ENCODE measurements at regions of chr7 and their contacts with region 1.

Region 1: GRCh38 chr7:127717502-127718339 is 65.7 kb downstream of the SND1 start:
- DNase-seq: no peak
- H3K4me3 ChIP-seq: no peak overlapping the region
- H3K27ac ChIP-seq: no peak overlapping the region
- H3K4me1 ChIP-seq: no peaks in the 10 kb centered on the region
- H3K27me3 ChIP-seq: no peaks in the 10 kb centered on the region
- CTCF ChIP-seq: no peak
- POLR2A ChIP-seq: no peak

Region 2: GRCh38 chr7:127635659-127636285 is 81.9 kb before region 1 on chr7:
- intact Hi-C with region 1: no loop called
- DNase-seq: no peak
- H3K4me3 ChIP-seq: no peak overlapping the region
- H3K27ac ChIP-seq: peak overlapping the region in 1 of 2 donors; percentile 76
- H3K4me1 ChIP-seq: no peaks in the 10 kb centered on the region
- H3K27me3 ChIP-seq: no peaks in the 10 kb centered on the region
- CTCF ChIP-seq: no peak
- POLR2A ChIP-seq: no peak

Region 3: DNA sequence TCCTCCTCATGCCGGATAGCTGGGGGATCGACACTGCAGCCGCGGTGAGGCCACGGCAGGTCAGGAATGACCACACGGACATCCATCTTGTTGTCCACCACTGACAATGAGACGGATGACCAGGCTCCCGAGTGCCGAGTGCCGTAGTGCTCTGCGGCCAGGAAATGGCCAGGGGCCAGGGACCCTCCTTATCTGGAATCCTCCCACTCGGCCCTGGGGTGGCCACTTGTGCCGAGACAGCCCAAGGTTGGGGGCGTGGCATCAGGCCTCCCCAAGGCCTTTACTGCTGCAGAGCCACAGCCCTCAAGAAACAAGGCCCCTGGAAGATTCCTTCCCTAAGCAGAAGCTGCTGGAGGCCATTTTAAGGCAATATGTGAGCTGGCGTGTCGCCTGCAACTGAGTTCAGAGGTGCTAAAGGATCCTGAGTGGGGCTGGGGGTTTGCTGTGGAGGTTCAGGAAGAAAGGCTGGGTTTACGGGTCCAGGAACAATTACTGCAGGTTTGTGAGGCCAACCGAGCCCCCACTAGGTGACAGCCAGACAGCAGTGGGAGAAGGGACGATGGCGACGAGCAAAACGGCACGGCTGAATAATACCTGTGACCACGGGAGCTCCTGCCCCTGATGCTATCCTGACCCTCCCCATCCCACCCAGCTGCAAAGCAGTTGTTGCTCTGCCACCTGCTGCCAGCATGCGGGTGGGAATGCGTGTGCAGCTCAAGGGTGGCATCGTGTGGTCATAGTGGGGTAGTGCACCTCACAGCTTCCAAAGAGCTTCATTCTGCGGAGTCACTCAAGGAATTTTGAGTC is 491.7 kb after region 1 on chr7:
- intact Hi-C with region 1: loop called (anchors 10 kb)
- DNase-seq: peak; percentile 52 to 70
- H3K4me3 ChIP-seq: no peak overlapping the region
- H3K27ac ChIP-seq: no peak overlapping the region
- H3K4me1 ChIP-seq: no peaks in the 10 kb centered on the region
- H3K27me3 ChIP-seq: peaks cover 0 to 4% of the 10 kb centered on the region in 2 donors
- CTCF ChIP-seq: peak; percentile 97 to 99 (median 98)
- POLR2A ChIP-seq: no peak

Measured in uterus (tissue), 4 donors.